ENCODE measurements at regions of chr9 and their contacts with region 1.

Region 1: GRCh38 chr9:127916665-127917613 is at the start of gene ST6GALNAC4:
- DNase-seq: peak; percentile 85 to 98 (median 92)
- ATAC-seq: peak; percentile 85 to 88
- H3K4me3 Mint-ChIP-seq: peak within 1 kb of the TSS; percentile 85 to 95 (median 92)
- H3K27ac Mint-ChIP-seq: peak within 1 kb of the TSS; percentile 83 to 98 (median 96)
- H3K4me1 Mint-ChIP-seq: peaks cover 25 to 70% (median 59%) of the 10 kb centered on the region in 4 donors
- H3K27me3 Mint-ChIP-seq: no peaks in the 10 kb centered on the region
- polyA plus RNA-seq, gene ST6GALNAC4: 19.8 to 34.4 (median 22.1) TPM

Region 2: GRCh38 chr9:127734747-127735529 is 182.0 kb before region 1 on chr9 and contains the start of gene TOR2A:
- POLR2A ChIA-PET with region 1: interaction called, 18 read pairs
- DNase-seq: peak; percentile 98 to 99 (median 99)
- ATAC-seq: peak; percentile 89 to 91
- H3K4me3 Mint-ChIP-seq: peak within 1 kb of the TSS; percentile 80 to 98 (median 96)
- H3K27ac Mint-ChIP-seq: peak within 1 kb of the TSS; percentile 82 to 98 (median 94)
- H3K4me1 Mint-ChIP-seq: peaks cover 9 to 20% (median 14%) of the 10 kb centered on the region in 4 donors
- H3K27me3 Mint-ChIP-seq: peaks cover 0 to 1% (median 0%) of the 10 kb centered on the region in 5 donors
- polyA plus RNA-seq, gene TOR2A: 18.1 to 24.7 (median 23.5) TPM

Region 3: DNA sequence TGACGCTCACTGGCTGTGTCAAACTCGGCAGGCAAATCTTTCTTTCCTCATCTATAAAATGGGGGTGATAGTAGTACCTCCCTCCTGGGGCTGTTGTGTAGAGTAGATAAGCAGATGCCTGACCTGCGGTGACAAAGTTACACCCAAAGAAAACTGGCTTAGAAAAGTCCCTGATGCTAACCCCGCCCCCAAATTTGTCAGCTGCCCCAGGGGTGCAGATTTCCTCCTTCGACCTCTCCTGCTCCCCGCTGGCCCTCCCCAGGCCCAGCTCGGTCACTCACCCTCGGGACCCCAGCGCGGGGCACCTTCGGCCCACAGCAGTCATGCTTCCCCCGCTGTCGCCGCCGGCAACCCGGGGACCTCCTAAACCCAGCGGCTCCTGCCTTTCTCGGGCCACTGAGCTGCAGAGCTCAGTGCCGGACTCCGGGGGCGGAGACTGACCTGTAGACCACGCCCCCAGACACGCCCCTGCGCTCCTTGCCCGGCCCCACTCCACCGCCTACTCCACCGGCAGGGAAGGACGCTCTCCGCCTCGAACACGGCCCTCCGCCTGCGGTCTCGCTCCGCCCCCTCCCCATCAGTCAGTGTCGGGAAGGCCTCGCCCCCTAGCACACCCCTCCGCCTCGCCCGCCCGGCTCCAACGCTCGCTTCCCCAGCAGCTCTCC is 145.9 kb before region 1 on chr9:
- POLR2A ChIA-PET with region 1: interaction called, 17 read pairs
- DNase-seq: peak; percentile 85 to 97 (median 91)
- ATAC-seq: peak; percentile 79 to 82
- H3K4me3 Mint-ChIP-seq: peak overlapping the region; percentile 83 to 94 (median 89)
- H3K27ac Mint-ChIP-seq: peak overlapping the region; percentile 93 to 98 (median 95)
- H3K4me1 Mint-ChIP-seq: peaks cover 40 to 85% (median 77%) of the 10 kb centered on the region in 4 donors
- H3K27me3 Mint-ChIP-seq: no peaks in the 10 kb centered on the region

Region 4: GRCh38 chr9:127802576-127803443 is 114.1 kb before region 1 on chr9 and contains the start of gene FPGS:
- POLR2A ChIA-PET with region 1: interaction called, 11 read pairs
- DNase-seq: peak; percentile 70 to 91 (median 84)
- ATAC-seq: peak; percentile 82 to 89
- H3K4me3 Mint-ChIP-seq: peak within 1 kb of the TSS; percentile 87 to 97 (median 94)
- H3K27ac Mint-ChIP-seq: peak within 1 kb of the TSS; percentile 84 to 97 (median 94)
- H3K4me1 Mint-ChIP-seq: peaks cover 4 to 47% (median 35%) of the 10 kb centered on the region in 4 donors
- H3K27me3 Mint-ChIP-seq: no peaks in the 10 kb centered on the region
- polyA plus RNA-seq, gene FPGS: 51.7 to 54.8 (median 53.4) TPM

Region 5: GRCh38 chr9:127883959-127884358 is 33.0 kb before region 1 on chr9:
- POLR2A ChIA-PET with region 1: no interaction called
- DNase-seq: no peak
- ATAC-seq: peak in 1 of 2 donors; percentile 21
- H3K4me3 Mint-ChIP-seq: no peak overlapping the region
- H3K27ac Mint-ChIP-seq: peak overlapping the region in 8 of 10 donors; percentile 4 to 88 (median 62)
- H3K4me1 Mint-ChIP-seq: peaks cover 14 to 23% (median 22%) of the 10 kb centered on the region in 4 donors
- H3K27me3 Mint-ChIP-seq: no peaks in the 10 kb centered on the region

Region 6: DNA sequence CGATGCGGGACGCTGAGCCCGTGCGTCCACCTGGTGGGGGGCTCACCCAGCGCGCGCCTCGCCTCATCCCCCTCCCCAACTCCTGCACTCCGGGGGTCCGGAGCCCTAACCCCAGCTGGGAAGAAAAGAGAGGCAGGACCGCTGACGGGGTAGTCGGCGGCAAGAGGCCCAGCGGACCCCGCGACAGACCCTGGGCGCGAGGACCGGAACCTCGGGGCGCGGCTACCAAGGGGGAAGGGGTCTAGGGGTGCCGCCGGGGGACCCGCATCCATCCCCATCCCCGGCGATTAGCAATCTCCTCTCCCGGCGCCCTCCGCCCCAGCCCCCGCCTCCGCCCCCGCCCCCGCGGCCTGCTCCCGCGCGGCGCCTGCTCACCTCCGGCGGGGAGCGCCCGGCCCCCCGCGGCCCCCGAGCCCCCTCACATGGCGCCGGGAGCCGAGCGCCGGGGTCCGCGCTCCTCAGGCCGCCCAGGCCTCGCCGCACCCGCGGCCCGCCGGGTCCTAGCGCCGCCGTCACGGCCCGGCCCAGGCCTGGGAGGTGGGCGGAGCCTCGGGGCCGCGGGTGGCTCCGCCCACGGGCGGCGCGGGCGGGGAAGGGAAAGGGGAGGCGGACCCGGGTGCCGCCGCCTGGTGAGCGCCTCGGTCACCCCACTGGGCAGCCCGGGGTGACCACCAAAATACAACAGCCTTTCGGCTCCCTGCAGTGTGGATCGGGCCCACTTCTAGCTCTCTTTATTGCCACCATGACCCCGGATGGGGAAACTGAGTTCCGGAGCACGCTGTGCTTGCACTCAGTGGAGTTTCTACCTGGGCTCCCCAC is 17.6 kb before region 1 on chr9 and contains the start of gene ST6GALNAC6:
- POLR2A ChIA-PET with region 1: interaction called, 328 read pairs
- DNase-seq: peak in 9 of 10 donors; percentile 30 to 75 (median 60)
- ATAC-seq: peak; percentile 73 to 79
- H3K4me3 Mint-ChIP-seq: peak within 1 kb of the TSS; percentile 79 to 93 (median 88)
- H3K27ac Mint-ChIP-seq: peak within 1 kb of the TSS; percentile 80 to 94 (median 88)
- H3K4me1 Mint-ChIP-seq: peaks cover 17 to 46% (median 42%) of the 10 kb centered on the region in 4 donors
- H3K27me3 Mint-ChIP-seq: no peaks in the 10 kb centered on the region
- polyA plus RNA-seq, gene ST6GALNAC6: 29.8 to 42.8 (median 30.3) TPM

Region 7: GRCh38 chr9:127937388-127938280 is 20.7 kb after region 1 on chr9 and contains the start of gene DPM2:
- POLR2A ChIA-PET with region 1: interaction called, 13 read pairs
- DNase-seq: peak; percentile 80 to 92 (median 86)
- ATAC-seq: peak; percentile 85 to 93
- H3K4me3 Mint-ChIP-seq: peak within 1 kb of the TSS; percentile 84 to 97 (median 93)
- H3K27ac Mint-ChIP-seq: peak within 1 kb of the TSS; percentile 75 to 97 (median 94)
- H3K4me1 Mint-ChIP-seq: peaks cover 28 to 60% (median 55%) of the 10 kb centered on the region in 4 donors
- H3K27me3 Mint-ChIP-seq: peaks cover 0 to 3% (median 0%) of the 10 kb centered on the region in 5 donors
- polyA plus RNA-seq, gene DPM2: 28.5 to 34.7 (median 34.2) TPM

Measured in naive thymus-derived CD8-positive, alpha-beta T cell (primary cell).